K562 (cell line): ENCODE measurements at regions of chr19 and their contacts with region 1.

Region 1: GRCh38 chr19:50794439-50795237 is 4.4 kb downstream of the ACP4 start:
- DNase-seq: peak; percentile 77 to 84 (median 79)
- ATAC-seq: peak; percentile 69
- H3K4me3 ChIP-seq: no peak overlapping the region
- H3K27ac ChIP-seq: no peak overlapping the region
- H3K4me1 ChIP-seq: peaks cover 7 to 66% of the 10 kb centered on the region in 2 experiments; a peak in 4 of 5 replicates
- H3K27me3 ChIP-seq: no peaks in the 10 kb centered on the region
- CTCF ChIP-seq: peak; percentile 61 to 70 (median 65)
- EP300 ChIP-seq: no peak
- POLR2A ChIP-seq: no peak; the same call in 1 of the 2 replicates
- RAD21 ChIP-seq: peak; percentile 53 to 79

Region 2: DNA sequence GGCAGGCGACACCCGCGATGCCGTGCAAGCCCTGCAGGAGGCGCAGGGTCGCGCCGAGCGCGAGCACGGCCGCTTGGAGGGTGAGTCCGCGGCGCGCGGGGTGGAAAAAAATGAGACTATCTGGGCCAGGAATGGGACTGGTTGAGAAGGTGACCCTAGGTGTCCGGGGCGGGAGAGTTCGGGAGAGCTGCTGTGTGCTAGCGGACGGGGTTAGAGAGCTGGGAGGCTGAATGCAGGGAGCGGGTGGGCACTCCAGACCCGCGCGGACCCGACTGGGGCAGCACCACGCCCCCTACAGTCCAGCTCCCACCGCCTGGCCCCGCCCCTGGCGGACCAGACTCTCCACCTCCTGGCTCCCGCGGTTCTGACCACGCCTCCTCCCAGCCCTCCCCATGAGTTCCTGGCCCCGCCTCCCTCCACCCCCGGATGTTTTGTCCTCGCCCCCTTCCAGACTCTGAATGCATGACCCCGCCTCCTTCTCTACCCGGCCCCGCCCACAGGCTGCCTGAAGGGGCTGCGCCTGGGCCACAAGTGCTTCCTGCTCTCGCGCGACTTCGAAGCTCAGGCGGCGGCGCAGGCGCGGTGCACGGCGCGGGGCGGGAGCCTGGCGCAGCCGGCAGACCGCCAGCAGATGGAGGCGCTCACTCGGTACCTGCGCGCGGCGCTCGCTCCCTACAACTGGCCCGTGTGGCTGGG is 70.0 kb before region 1 on chr19:
- CTCF ChIA-PET with region 1: no interaction called
- POLR2A ChIA-PET with region 1: interaction called, 10 read pairs
- in situ Hi-C with region 1: no loop called
- intact Hi-C with region 1: no loop called
- DNase-seq: peak; percentile 98 to 100 (median 99)
- ATAC-seq: peak; percentile 86
- H3K4me3 ChIP-seq: peak overlapping the region; percentile 59
- H3K27ac ChIP-seq: peak overlapping the region; percentile 80
- H3K4me1 ChIP-seq: peaks cover 33 to 67% of the 10 kb centered on the region in 2 experiments; a peak in 4 of 5 replicates
- H3K27me3 ChIP-seq: no peaks in the 10 kb centered on the region
- CTCF ChIP-seq: peak; percentile 87 to 96 (median 91)
- EP300 ChIP-seq: no peak
- POLR2A ChIP-seq: peak; percentile 86
- RAD21 ChIP-seq: peak; percentile 82 to 83

Region 3: DNA sequence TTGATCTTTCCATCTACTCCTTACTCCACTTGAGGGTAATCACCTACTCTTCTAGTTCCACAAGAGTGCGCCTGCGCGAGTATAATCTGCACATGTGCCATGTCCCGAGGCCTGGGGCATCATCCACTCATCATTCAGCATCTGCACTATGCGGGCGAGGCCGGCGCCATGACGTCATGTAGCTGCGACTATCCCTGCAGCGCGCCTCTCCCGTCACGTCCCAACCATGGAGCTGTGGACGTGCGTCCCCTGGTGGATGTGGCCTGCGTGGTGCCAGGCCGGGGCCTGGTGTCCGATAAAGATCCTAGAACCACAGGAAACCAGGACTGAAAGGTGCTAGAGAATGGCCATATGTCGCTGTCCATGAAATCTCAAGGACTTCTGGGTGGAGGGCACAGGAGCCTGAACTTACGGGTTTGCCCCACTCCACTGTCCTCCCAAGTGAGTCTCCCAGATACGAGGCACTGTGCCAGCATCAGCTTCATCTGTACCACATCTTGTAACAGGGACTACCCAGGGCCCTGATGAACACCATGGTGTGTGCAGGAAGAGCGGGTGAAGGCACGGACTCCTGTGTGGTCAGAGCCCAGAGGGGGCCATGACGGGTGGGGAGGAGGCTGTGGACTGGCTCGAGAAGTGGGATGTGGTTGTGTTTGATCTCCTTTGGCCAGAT is 75.9 kb after region 1 on chr19:
- CTCF ChIA-PET with region 1: interaction called, 3 read pairs
- POLR2A ChIA-PET with region 1: interaction called, 5 read pairs
- in situ Hi-C with region 1: loop called (anchors 5 kb)
- intact Hi-C with region 1: loop called (anchors 1 kb)
- DNase-seq: peak; percentile 93 to 94 (median 94)
- ATAC-seq: peak; percentile 99
- H3K4me3 ChIP-seq: no peak overlapping the region
- H3K27ac ChIP-seq: no peak overlapping the region; the same call in 2 of the 3 replicates
- H3K4me1 ChIP-seq: peaks cover 4 to 7% of the 10 kb centered on the region in 2 experiments; a peak in 4 of 5 replicates
- H3K27me3 ChIP-seq: peaks cover 13 to 30% of the 10 kb centered on the region in 2 experiments; a peak in 3 of 5 replicates
- CTCF ChIP-seq: peak; percentile 92 to 98 (median 98)
- EP300 ChIP-seq: peak; percentile 51; the same call in 1 of the 2 replicates
- POLR2A ChIP-seq: peak; percentile 42; the same call in 1 of the 2 replicates
- RAD21 ChIP-seq: peak; percentile 88 to 96

Region 4: GRCh38 chr19:50915943-50916468 is 121.4 kb after region 1 on chr19:
- CTCF ChIA-PET with region 1: no interaction called
- POLR2A ChIA-PET with region 1: interaction called, 4 read pairs
- in situ Hi-C with region 1: loop called (anchors 5 kb)
- intact Hi-C with region 1: no loop called
- DNase-seq: no peak
- ATAC-seq: no peak
- H3K4me3 ChIP-seq: no peak overlapping the region
- H3K27ac ChIP-seq: no peak overlapping the region
- H3K4me1 ChIP-seq: peaks cover 0 to 7% of the 10 kb centered on the region in 2 experiments; a peak in 2 of 5 replicates
- H3K27me3 ChIP-seq: peaks cover 26 to 53% of the 10 kb centered on the region in 2 experiments
- CTCF ChIP-seq: no peak
- EP300 ChIP-seq: no peak
- POLR2A ChIP-seq: no peak
- RAD21 ChIP-seq: no peak

Region 5: DNA sequence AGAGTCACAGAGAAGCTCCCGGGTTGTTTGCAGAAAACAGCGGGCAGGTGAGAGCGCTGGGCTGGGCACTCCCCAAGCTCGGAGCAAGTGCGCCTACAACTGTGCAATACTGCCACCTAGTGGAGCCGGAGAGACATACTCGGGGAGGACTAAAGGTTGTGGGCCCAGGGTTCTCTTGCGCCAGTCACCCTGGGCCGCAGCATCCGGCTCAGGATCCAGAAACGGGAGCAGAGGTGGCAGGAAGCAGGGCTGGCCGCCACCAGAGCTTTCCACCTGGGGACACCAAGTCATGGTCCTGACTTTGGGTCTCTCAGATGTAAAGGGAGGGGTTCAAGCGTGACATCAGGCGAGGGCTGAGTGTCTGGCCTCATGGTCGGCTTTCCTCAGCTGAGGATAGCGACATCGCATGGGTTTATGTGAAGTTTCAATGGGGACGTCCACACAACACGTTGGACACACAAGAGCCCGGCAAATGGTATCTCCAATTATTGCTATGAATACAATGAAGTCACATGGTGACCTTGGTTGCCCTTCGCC is 127.7 kb after region 1 on chr19:
- CTCF ChIA-PET with region 1: interaction called, 4 read pairs
- POLR2A ChIA-PET with region 1: interaction called, 10 read pairs
- in situ Hi-C with region 1: loop called (anchors 5 kb)
- intact Hi-C with region 1: loop called (anchors 2 kb)
- DNase-seq: peak; percentile 84 to 89 (median 87)
- ATAC-seq: peak; percentile 100
- H3K4me3 ChIP-seq: no peak overlapping the region
- H3K27ac ChIP-seq: no peak overlapping the region
- H3K4me1 ChIP-seq: no peaks in the 10 kb centered on the region
- H3K27me3 ChIP-seq: peaks cover 6 to 23% of the 10 kb centered on the region in 2 experiments; a peak in 3 of 5 replicates
- CTCF ChIP-seq: peak; percentile 88 to 92 (median 91)
- EP300 ChIP-seq: no peak
- POLR2A ChIP-seq: no peak
- RAD21 ChIP-seq: peak; percentile 83 to 89